ENCODE measurements at regions of chr5 and their contacts with region 1.

Region 1: DNA sequence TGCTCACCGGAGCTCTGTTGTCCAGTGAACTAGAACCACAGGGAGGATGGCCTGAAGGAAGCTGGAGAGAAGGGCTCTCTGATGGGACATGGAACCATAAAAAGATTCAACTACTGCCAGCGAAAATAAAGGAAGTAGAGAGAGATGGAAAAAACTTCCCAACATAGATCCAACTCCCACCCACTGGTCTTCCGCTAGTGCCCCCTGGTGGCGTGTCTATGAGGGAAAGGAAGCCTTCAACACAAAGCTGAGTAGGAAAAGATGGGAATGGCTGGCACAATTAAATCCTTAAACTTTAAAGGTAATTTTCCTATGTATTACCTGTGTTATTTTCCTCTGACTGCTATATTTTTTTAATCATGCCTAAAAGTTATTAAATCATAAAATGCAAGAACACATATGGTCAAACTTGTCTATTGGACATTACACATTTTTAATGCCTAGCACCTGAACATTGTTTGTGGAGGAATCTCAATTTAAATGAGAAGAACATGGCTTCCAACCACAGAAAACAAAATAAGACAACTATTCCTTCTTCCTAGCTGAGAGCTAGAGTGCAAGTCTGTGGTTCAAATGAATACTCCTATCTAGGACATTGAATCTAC is 51.5 kb downstream of the CEP120 start:
- DNase-seq: peak; percentile 40
- H3K4me3 Mint-ChIP-seq: no peak overlapping the region
- H3K27ac Mint-ChIP-seq: no peak overlapping the region
- H3K4me1 Mint-ChIP-seq: no peaks in the 10 kb centered on the region
- H3K27me3 Mint-ChIP-seq: no peaks in the 10 kb centered on the region

Region 2: GRCh38 chr5:122192497-122193496 is 1178.9 kb before region 1 on chr5:
- CTCF ChIA-PET with region 1: no interaction called
- intact Hi-C with region 1: loop called (anchors 5 kb)
- DNase-seq: peak; percentile 20
- H3K4me3 Mint-ChIP-seq: no peak overlapping the region
- H3K27ac Mint-ChIP-seq: no peak overlapping the region
- H3K4me1 Mint-ChIP-seq: no peaks in the 10 kb centered on the region
- H3K27me3 Mint-ChIP-seq: peaks cover 42% of the 10 kb centered on the region

Region 3: GRCh38 chr5:122515709-122516431 is 855.8 kb before region 1 on chr5:
- CTCF ChIA-PET with region 1: no interaction called
- intact Hi-C with region 1: loop called (anchors 5 kb)
- DNase-seq: peak; percentile 14
- H3K4me3 Mint-ChIP-seq: no peak overlapping the region
- H3K27ac Mint-ChIP-seq: no peak overlapping the region
- H3K4me1 Mint-ChIP-seq: no peaks in the 10 kb centered on the region
- H3K27me3 Mint-ChIP-seq: peaks cover 8% of the 10 kb centered on the region

Region 4: GRCh38 chr5:122896598-122897282 is 474.9 kb before region 1 on chr5:
- CTCF ChIA-PET with region 1: interaction called, 3 read pairs
- intact Hi-C with region 1: loop called (anchors 5 kb)
- DNase-seq: no peak
- H3K4me3 Mint-ChIP-seq: no peak overlapping the region
- H3K27ac Mint-ChIP-seq: no peak overlapping the region
- H3K4me1 Mint-ChIP-seq: no peaks in the 10 kb centered on the region
- H3K27me3 Mint-ChIP-seq: no peaks in the 10 kb centered on the region

Region 5: DNA sequence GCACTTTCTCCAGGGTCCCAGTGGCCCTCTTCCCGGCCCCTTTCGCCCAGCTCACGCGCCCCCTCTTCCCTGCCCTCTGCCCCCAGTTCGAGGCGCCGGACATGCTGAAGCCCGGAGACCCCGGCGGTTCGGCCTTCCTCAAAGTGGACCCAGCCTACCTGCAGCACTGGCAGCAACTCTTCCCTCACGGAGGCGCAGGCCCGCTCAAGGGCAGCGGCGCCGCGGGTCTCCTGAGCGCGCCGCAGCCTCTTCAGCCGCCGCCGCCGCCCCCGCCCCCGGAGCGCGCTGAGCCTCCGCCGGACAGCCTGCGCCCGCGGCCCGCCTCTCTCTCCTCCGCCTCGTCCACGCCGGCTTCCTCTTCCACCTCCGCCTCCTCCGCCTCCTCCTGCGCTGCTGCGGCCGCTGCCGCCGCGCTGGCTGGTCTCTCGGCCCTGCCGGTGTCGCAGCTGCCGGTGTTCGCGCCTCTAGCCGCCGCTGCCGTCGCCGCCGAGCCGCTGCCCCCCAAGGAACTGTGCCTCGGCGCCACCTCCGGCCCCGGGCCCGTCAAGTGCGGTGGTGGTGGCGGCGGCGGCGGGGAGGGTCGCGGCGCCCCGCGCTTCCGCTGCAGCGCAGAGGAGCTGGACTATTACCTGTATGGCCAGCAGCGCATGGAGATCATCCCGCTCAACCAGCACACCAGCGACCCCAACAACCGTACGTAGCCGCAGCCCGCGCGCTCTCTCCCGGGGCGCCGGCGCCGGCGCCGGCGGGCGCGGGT is 281.6 kb before region 1 on chr5:
- CTCF ChIA-PET with region 1: no interaction called
- intact Hi-C with region 1: loop called (anchors 10 kb)
- DNase-seq: no peak
- H3K4me3 Mint-ChIP-seq: no peak overlapping the region
- H3K27ac Mint-ChIP-seq: no peak overlapping the region
- H3K4me1 Mint-ChIP-seq: peaks cover 30% of the 10 kb centered on the region
- H3K27me3 Mint-ChIP-seq: peaks cover 72% of the 10 kb centered on the region

Measured in activated naive CD4-positive, alpha-beta T cell treated with anti-CD3 and anti-CD28 coated beads for 36 hours (primary cell).